ENCODE measurements at regions of chr1 and their contacts with region 1.

Region 1: DNA sequence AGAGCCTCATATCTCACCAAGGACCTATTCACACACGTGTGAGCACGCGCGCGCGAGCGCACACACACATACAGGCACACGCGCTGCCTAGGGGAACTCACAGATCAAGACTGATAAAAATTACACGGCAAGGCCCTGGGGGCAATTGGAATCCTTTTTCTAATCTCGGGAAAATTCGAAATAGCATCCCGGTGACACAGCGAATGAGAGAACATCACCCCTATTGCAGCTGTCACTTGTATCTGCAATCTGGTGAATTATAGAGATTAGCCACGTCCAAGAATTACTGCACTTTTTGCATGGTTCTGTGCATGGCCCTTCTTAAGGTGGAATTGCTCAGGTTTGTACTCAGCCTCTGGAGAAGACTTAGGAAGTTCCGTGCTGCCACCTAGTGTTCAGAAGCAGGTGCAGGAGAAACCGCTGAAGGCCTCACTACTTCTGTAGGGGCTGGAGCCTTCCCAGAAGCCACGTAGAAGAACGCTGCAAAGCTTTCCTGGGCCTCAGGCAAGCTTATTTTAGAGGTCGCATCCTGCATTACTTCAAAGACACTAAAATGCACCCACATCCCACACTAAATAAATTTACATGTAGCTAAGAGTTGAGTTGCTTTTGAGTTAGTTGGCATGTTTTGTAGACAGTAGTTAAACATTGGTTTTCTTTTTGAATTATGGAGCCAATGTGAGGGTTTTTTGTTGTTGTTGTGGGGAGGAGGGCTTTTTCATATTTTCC is 229.2 kb upstream of the CAMK1G start:
- DNase-seq: peak; percentile 14
- H3K4me3 Mint-ChIP-seq: no peak overlapping the region
- H3K27ac Mint-ChIP-seq: no peak overlapping the region
- H3K4me1 Mint-ChIP-seq: no peaks in the 10 kb centered on the region
- H3K27me3 Mint-ChIP-seq: peaks cover 9% of the 10 kb centered on the region

Region 2: DNA sequence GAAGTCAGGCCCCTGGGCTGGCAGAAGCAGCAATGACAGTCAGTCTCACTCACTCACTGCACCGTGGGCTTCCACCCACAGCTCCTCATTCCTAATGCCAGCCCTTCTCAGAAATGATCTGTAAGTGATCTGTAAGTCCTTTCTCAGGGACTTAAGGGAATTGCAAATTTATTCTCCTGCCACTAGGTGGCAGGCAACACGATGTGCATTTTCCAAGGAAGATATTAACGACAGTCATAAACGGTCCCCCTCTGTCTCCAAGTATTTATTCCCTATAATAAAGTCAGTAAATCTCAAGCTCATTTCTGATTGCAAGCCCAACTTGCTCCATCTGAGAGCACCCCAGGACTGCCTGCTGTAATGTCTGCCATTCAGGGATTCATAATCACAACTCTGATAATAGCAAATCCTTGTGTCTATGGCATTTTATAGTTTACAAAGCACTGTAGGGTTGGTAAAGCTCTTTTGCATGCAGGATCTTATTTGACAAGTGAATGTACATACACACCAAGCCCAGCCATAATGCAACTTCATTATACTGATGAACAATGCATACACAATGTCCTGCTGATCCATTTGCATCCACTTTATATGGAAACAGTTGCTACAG is 151.3 kb before region 1 on chr1:
- intact Hi-C with region 1: loop called (anchors 5 kb)
- DNase-seq: no peak
- H3K4me3 Mint-ChIP-seq: no peak overlapping the region
- H3K27ac Mint-ChIP-seq: no peak overlapping the region
- H3K4me1 Mint-ChIP-seq: no peaks in the 10 kb centered on the region
- H3K27me3 Mint-ChIP-seq: peaks cover 21% of the 10 kb centered on the region